Esophagus muscularis mucosa (tissue), 4 donors: ENCODE measurements at regions of chr11 and their contacts with region 1.

Region 1: DNA sequence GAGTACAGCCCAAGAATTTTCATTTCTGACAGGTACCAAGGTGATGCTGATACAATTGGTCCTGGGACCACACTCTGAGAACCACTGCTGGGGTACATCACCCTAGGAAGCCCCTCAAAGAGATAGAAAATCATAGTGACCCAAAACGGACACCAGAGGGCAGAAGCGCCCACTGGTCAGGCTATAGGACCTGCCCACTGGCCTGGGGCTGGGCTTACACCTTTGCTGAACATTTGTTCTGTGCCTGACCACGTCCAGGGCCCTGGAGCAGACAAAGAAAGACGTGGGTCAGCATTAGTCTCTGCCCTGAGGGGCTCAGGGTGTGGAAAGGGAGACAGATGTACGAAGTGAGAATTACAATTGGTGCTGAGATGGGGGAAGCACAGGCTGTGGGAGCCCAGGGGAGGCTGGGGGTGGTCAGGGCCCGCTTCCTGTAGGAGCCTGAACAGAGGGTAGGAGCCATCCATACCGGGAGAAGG is 14.4 kb upstream of the SERPINH1 start:
- DNase-seq: no peak
- H3K4me3 ChIP-seq: no peak overlapping the region
- H3K27ac ChIP-seq: peak overlapping the region in 1 of 4 donors; percentile 39
- H3K4me1 ChIP-seq: peaks cover 5 to 8% (median 8%) of the 10 kb centered on the region in 4 donors
- H3K27me3 ChIP-seq: no peaks in the 10 kb centered on the region
- CTCF ChIP-seq: peak; percentile 87 to 94 (median 89)
- EP300 ChIP-seq: no peak
- POLR2A ChIP-seq: no peak

Region 2: DNA sequence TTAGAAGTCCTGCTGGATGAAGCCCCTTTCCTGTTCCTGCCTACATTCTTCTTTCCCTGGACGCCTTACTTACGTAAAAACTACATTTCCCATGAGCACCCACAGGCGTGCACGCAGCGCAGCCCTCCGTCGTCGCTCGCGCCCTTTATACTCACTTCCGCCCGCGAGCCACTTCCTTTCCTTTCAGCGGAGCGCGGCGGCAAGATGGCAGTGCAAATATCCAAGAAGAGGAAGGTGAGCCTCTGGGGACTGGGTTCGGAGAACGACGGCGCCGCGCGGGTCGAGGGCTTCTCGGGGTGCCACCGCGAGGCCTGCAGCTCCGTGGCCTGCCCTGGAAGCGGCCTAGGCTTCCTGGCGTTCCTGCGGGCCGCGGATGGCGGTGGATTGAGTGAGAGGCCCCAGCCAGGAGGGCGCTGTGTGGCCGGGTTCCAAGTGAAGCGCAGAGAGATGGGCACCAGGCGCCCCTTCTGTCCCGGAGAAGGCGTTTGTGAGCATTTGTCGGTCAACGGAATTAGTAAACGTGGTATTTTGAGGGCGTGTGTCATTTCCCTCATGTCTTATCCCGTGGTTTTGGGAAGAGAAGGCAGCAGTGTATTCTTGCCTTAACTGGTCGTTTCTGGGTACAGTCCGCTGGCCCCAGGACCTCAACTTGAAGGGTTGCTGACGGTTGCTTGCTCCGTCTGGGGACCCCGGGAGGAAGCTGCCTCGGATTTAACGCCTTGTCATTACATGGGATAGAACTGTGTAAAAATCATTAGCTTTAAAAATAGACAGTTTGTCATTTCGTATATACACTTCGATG is 148.1 kb before region 1 on chr11 and contains the start of gene RPS3:
- intact Hi-C with region 1: no loop called
- DNase-seq: peak; percentile 98
- H3K4me3 ChIP-seq: peak within 1 kb of the TSS; percentile 66 to 73 (median 72)
- H3K27ac ChIP-seq: peak within 1 kb of the TSS; percentile 89 to 94 (median 90)
- H3K4me1 ChIP-seq: peaks cover 13 to 44% (median 28%) of the 10 kb centered on the region in 4 donors
- H3K27me3 ChIP-seq: no peaks in the 10 kb centered on the region
- CTCF ChIP-seq: peak in 1 of 3 experiments; percentile 27
- EP300 ChIP-seq: no peak
- POLR2A ChIP-seq: peak; percentile 84
- total RNA-seq, gene RPS3: 879 to 1,878 (median 1,387) TPM

Region 3: GRCh38 chr11:75577207-75577606 is 29.6 kb after region 1 on chr11:
- intact Hi-C with region 1: loop called (anchors 2 kb)
- DNase-seq: no peak
- H3K4me3 ChIP-seq: no peak overlapping the region
- H3K27ac ChIP-seq: peak overlapping the region in 2 of 4 donors; percentile 28 to 29
- H3K4me1 ChIP-seq: peaks cover 17 to 41% (median 31%) of the 10 kb centered on the region in 4 donors
- H3K27me3 ChIP-seq: no peaks in the 10 kb centered on the region
- CTCF ChIP-seq: peak; percentile 38 to 77 (median 74)
- EP300 ChIP-seq: no peak
- POLR2A ChIP-seq: no peak

Region 4: DNA sequence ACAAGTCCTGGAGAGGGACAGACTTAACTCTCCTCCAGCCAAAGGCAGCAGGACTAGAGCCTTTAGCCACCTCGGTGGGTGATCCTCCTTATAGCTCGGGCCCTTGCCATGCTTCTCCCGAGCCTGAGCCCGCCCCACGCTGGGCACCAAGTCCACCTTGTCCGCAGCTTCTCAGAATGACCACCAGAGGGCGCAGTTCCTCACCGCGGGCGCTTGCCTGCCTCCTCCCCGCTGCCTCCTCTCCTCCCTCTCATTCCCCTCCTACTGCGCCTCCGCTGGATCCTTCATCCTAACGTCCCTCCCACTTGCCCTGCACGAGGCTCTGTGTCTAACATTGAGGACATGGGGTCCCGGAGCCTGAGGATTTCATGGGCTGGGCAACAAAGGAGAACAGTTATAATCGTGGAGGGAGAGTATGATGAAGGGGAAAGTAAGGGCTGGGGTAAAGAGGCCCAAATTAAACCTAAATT is 158.7 kb after region 1 on chr11:
- intact Hi-C with region 1: loop called (anchors 5 kb)
- DNase-seq: peak; percentile 93
- H3K4me3 ChIP-seq: peak overlapping the region in 3 of 4 donors; percentile 30 to 33 (median 32)
- H3K27ac ChIP-seq: no peak overlapping the region
- H3K4me1 ChIP-seq: peaks cover 0 to 10% (median 9%) of the 10 kb centered on the region in 4 donors
- H3K27me3 ChIP-seq: no peaks in the 10 kb centered on the region
- CTCF ChIP-seq: peak; percentile 88 to 99 (median 92)
- EP300 ChIP-seq: no peak
- POLR2A ChIP-seq: no peak